Activated T-helper 1 cell treated with anti-CD3 and anti-CD28 coated beads, Interleukin-12 subunit alpha, Interleukin-12 subunit beta, Interleukin-2, Interleukin-4 antibody, amounts not matched to agents 30 ng/mL and 10 ng/mL and 1 ng/mL, durations not matched to agents 14 hours and 24 hours and 36 hours (primary cell): ENCODE measurements at regions of chr11 and their contacts with region 1.

Region 1: DNA sequence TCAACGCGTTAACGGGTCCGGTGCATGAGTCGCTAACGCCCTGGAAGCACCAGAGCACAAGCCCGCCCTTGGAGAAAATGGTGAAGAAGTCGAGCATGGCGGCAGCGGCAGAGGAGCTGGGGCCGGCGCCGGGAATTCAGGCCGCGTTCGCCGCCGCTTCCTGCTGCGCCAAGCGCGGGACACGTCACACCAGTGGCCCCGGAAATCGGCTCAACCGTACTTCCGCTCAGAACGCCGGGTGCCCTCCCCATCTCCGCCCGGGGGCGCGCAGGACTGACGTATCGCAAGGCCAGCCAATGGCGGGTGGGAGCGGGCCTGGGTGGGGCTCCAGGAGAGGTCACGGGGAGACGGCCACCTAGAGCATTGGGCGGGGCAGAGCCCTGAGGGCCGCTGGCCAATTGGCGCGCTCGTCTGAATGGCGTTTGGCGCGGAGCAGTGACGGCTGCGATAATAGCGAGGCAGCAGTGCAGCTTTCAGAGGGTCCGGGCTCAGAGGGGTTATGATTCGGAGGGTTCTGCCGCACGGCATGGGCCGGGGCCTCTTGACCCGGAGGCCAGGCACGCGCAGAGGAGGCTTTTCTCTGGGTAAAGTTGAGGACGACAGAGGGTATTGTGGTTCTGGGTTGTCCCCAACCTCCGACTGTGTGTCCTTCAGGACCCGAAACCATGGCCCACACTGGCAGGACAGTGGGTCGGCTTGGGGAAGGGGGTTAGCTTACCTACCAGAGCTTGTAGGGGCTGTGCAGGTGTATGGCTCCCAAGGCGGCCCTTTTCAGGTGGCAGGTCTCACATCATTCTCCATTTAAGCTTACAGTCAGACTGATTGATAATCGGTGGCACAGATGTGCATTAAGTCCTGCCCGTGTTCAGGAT is at the starts of genes FOXRED1 and SRPRA:
- DNase-seq: peak; percentile 100
- H3K4me3 Mint-ChIP-seq: peak within 1 kb of the TSS; percentile 99
- H3K27ac Mint-ChIP-seq: peak within 1 kb of the TSS; percentile 96
- H3K4me1 Mint-ChIP-seq: peaks cover 45% of the 10 kb centered on the region
- H3K27me3 Mint-ChIP-seq: no peaks in the 10 kb centered on the region
- total RNA-seq, gene FOXRED1: 52.9 and 56.5 TPM in 2 replicates
- total RNA-seq, gene SRPRA: 194 and 195 TPM in 2 replicates

Region 2: DNA sequence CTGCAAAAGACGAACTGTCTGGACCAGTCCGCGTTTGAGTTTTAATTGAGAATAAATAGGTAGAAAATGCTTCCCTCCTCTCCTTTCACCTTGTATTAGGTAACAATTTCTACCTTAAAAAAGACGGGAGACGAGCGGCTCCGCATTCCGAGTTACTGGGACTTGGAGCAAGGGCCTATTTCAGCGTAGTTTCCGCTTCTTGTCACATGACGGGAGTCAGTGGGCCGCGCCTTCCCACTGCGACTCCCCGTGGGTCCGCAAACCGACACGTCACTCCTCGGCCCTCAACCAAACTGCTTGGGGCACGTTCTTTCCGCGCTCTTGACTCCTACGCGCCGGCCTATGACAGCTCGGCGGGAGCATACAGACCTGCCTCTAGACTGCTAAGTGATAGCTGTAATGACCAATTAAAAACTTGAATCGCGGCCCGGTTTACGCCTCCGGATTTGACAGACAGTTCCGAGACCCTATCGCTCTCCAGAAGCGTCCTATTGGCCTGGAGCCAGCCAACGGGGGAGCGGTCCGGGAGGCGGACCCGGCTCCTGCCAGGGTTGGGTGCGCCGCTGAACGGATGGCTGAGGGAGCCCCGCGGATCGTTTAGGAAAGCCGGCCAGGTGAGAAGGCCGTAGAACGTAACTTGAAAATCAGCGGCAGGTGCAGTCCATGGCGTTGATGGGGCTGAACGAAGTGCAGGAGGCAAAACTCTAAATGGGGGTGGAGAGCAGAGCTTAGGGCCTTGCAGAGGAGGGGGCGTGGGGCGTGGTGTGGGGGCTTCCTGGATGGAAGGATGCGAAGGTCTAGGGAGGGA is 676.4 kb before region 1 on chr11 and contains the start of gene STT3A:
- intact Hi-C with region 1: loop called (anchors 1 kb)
- DNase-seq: peak; percentile 98
- H3K4me3 Mint-ChIP-seq: peak within 1 kb of the TSS; percentile 98
- H3K27ac Mint-ChIP-seq: peak within 1 kb of the TSS; percentile 94
- H3K4me1 Mint-ChIP-seq: peaks cover 50% of the 10 kb centered on the region
- H3K27me3 Mint-ChIP-seq: no peaks in the 10 kb centered on the region
- total RNA-seq, gene STT3A: 164 and 171 TPM in 2 replicates

Region 3: DNA sequence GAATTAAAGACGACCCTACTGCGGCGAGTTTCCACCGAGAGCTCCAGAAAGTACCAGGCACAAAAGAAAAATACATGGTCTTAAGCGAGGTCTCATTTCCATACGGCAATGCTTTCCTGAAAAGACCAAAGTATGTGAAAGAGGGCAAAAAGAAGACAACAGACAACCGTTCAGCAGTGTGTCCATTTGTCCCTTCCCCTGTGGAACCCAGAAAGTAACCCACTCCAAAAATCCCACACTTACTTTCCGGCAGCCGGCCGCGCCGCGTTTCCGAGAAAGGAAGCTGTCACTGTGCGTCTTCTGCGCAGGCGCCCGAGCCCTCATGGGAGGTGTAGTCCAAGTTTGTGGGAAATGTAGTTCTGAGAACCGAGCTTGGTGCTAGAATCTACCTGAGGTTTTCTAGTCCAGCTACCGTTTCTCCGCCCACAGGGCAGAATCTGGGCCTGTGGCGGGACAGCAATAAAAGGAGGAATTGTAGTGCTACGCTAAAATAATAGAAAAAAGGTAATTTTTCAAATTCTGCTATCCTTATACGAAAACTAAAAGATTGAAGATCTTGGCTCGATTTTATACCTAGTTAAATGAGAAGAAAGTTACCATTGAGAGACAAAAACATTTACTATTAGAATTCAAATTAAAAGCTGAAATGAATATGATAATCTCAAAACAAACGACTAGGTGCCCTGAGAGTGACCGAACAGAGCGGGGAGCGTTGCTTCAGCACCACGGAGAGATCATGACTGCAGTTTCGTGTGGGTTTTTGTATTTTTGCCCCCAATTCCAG is 365.8 kb before region 1 on chr11 and contains the start of gene PUS3:
- intact Hi-C with region 1: loop called (anchors 1 kb)
- DNase-seq: peak; percentile 85
- H3K4me3 Mint-ChIP-seq: peak within 1 kb of the TSS; percentile 98
- H3K27ac Mint-ChIP-seq: peak within 1 kb of the TSS; percentile 88
- H3K4me1 Mint-ChIP-seq: peaks cover 28% of the 10 kb centered on the region
- H3K27me3 Mint-ChIP-seq: peaks cover 34% of the 10 kb centered on the region
- total RNA-seq, gene PUS3: 16.5 and 23.6 TPM in 2 replicates

Region 4: GRCh38 chr11:126202646-126203359 is 66.1 kb before region 1 on chr11:
- intact Hi-C with region 1: no loop called
- DNase-seq: no peak
- H3K4me3 Mint-ChIP-seq: no peak overlapping the region
- H3K27ac Mint-ChIP-seq: no peak overlapping the region
- H3K4me1 Mint-ChIP-seq: no peaks in the 10 kb centered on the region
- H3K27me3 Mint-ChIP-seq: no peaks in the 10 kb centered on the region

Region 5: DNA sequence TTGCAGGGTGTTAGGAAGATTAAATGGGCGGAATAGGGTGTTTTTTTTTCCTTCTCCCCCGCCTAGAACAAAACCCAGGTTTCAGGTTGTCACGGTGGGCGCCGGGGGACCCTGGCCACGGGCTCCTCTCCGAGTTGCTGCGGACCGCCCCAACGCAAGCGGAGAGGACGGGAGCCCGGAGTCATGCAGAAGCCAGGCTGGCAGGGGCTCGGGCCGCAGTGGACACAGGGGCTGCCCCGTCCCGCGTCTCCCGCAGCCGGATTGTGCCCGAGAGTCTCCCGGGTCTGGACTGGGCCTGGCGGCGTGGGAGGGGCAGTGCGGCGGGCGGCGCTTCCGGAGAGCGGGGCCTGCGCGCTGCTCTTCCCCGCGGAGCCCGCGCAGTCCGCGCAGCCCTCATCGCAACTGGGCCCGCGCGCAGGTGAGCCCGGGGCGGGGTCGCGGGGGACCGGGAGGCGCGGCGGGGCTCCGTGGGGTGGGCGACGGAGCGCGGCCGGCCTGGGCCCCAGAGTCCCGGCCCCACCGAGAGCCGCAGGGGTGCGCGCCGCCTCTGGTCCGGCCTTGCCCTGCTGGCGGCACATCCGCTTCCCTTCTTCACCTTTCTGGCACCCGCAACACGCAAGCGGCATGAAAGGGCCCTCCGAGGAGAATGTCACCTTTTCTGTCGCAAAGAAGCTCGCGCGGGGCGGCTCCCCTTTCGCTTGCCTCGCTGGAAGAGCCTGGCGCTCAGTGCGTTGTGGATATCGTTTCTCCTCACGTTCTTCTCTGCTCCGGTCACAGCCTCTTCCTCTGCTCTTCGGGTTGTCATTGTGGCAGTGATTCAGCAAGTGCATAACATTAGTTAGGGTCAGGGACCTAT is 14.0 kb after region 1 on chr11 and contains the start of gene TIRAP:
- intact Hi-C with region 1: loop called (anchors 1 kb)
- DNase-seq: peak; percentile 53
- H3K4me3 Mint-ChIP-seq: peak within 1 kb of the TSS; percentile 98
- H3K27ac Mint-ChIP-seq: peak within 1 kb of the TSS; percentile 98
- H3K4me1 Mint-ChIP-seq: peaks cover 45% of the 10 kb centered on the region
- H3K27me3 Mint-ChIP-seq: no peaks in the 10 kb centered on the region
- total RNA-seq, gene TIRAP: 13.0 and 15.0 TPM in 2 replicates

Region 6: GRCh38 chr11:126310228-126310991 is 41.5 kb after region 1 on chr11:
- intact Hi-C with region 1: no loop called
- DNase-seq: peak; percentile 41
- H3K4me3 Mint-ChIP-seq: no peak overlapping the region
- H3K27ac Mint-ChIP-seq: peak overlapping the region; percentile 13
- H3K4me1 Mint-ChIP-seq: peaks cover 39% of the 10 kb centered on the region
- H3K27me3 Mint-ChIP-seq: no peaks in the 10 kb centered on the region

Region 7: GRCh38 chr11:126355324-126355925 is 86.5 kb after region 1 on chr11 and contains the start of gene ST3GAL4:
- intact Hi-C with region 1: loop called (anchors 1 kb)
- DNase-seq: peak; percentile 64
- H3K4me3 Mint-ChIP-seq: peak within 1 kb of the TSS; percentile 95
- H3K27ac Mint-ChIP-seq: peak within 1 kb of the TSS; percentile 92
- H3K4me1 Mint-ChIP-seq: peaks cover 36% of the 10 kb centered on the region
- H3K27me3 Mint-ChIP-seq: no peaks in the 10 kb centered on the region
- total RNA-seq, gene ST3GAL4: 13.2 and 14.1 TPM in 2 replicates

Region 8: DNA sequence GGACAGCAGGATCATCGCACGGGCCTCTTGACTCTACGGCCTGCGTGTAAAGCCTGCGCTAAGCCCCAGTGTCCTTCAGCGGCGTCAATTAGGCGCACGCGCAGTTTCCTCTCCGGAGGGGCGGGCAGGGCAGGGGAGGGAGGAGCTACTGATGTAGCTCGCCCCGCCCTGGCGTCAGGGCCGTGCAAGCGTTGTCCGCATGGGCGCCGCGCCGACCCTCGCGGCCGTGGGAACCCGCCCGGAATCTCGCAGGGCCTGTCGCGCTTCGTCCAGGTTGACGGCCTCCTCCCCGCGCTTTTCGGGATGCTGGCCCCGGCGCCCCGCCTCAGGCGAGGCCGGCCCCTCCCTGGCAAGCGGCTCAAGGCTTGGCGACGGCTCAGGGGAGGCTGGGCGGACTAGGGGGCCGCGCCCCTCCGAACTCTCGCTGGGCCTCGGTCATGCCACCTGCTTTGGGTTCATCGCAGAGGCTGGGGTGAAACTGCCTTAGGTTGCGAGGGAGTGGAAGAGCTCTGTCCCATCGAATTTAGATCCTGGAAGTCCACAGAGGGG is 147.7 kb after region 1 on chr11:
- intact Hi-C with region 1: loop called (anchors 2 kb)
- DNase-seq: peak; percentile 59
- H3K4me3 Mint-ChIP-seq: peak overlapping the region; percentile 62
- H3K27ac Mint-ChIP-seq: no peak overlapping the region
- H3K4me1 Mint-ChIP-seq: peaks cover 17% of the 10 kb centered on the region
- H3K27me3 Mint-ChIP-seq: peaks cover 5% of the 10 kb centered on the region